Transverse colon (tissue), 4 donors: ENCODE measurements at regions of chr1 and their contacts with region 1.

Region 1: GRCh38 chr1:115219937-115220336 is 118.1 kb downstream of the NGF start:
- DNase-seq: no peak
- H3K4me3 ChIP-seq: no peak overlapping the region
- H3K27ac ChIP-seq: no peak overlapping the region
- H3K4me1 ChIP-seq: no peaks in the 10 kb centered on the region
- H3K27me3 ChIP-seq: no peaks in the 10 kb centered on the region
- CTCF ChIP-seq: no peak
- EP300 ChIP-seq: no peak
- POLR2A ChIP-seq: no peak

Region 2: GRCh38 chr1:115112496-115113375 is 107.2 kb before region 1 on chr1:
- in situ Hi-C with region 1: no loop called
- intact Hi-C with region 1: no loop called
- DNase-seq: peak; percentile 38
- H3K4me3 ChIP-seq: no peak overlapping the region
- H3K27ac ChIP-seq: no peak overlapping the region
- H3K4me1 ChIP-seq: peaks cover 0 to 9% (median 0%) of the 10 kb centered on the region in 4 donors
- H3K27me3 ChIP-seq: no peaks in the 10 kb centered on the region
- CTCF ChIP-seq: peak; percentile 87 to 96 (median 95)
- EP300 ChIP-seq: no peak
- POLR2A ChIP-seq: no peak

Region 3: DNA sequence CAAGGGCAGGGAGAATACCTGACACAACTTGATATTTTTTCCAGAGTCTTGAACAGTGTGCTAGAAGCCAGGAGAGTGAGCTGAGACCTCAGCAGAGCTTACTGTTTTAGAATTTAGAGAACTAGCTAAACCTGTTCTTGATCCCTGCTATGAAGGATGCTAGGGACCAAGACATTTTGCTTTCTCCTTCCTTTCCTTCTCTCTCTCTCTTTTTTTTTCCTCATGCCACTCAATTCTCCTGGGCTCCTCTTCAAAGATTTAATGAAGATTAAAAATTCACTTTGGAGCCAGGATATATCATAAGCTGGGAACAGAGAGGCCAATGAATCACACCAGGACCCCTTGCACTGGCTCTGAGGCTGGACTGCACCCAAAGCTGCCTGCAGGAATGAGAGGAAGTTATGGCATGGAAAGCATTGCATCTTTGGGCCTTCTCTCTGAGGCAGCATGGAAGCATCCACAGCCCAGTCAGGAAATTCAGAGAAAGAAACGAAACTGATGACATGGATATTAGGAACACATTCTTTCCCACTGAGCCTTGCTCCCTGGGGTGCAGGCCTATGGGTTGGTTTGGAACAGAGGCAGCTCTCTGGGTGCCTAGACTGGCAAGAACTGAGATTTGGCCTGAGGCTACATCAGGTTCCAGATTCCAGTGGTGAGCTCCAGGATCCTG is 19.3 kb after region 1 on chr1:
- in situ Hi-C with region 1: no loop called
- intact Hi-C with region 1: no loop called
- DNase-seq: no peak
- H3K4me3 ChIP-seq: no peak overlapping the region
- H3K27ac ChIP-seq: no peak overlapping the region
- H3K4me1 ChIP-seq: no peaks in the 10 kb centered on the region
- H3K27me3 ChIP-seq: no peaks in the 10 kb centered on the region
- CTCF ChIP-seq: no peak
- EP300 ChIP-seq: no peak
- POLR2A ChIP-seq: no peak

Region 4: GRCh38 chr1:116299248-116299915 is 1079.4 kb after region 1 on chr1:
- in situ Hi-C with region 1: no loop called
- intact Hi-C with region 1: loop called (anchors 5 kb)
- DNase-seq: no peak
- H3K4me3 ChIP-seq: no peak overlapping the region
- H3K27ac ChIP-seq: no peak overlapping the region
- H3K4me1 ChIP-seq: peaks cover 0 to 4% (median 2%) of the 10 kb centered on the region in 4 donors
- H3K27me3 ChIP-seq: no peaks in the 10 kb centered on the region
- CTCF ChIP-seq: no peak
- EP300 ChIP-seq: no peak
- POLR2A ChIP-seq: no peak